ENCODE measurements at regions of chr3 and their contacts with region 1.

Region 1: DNA sequence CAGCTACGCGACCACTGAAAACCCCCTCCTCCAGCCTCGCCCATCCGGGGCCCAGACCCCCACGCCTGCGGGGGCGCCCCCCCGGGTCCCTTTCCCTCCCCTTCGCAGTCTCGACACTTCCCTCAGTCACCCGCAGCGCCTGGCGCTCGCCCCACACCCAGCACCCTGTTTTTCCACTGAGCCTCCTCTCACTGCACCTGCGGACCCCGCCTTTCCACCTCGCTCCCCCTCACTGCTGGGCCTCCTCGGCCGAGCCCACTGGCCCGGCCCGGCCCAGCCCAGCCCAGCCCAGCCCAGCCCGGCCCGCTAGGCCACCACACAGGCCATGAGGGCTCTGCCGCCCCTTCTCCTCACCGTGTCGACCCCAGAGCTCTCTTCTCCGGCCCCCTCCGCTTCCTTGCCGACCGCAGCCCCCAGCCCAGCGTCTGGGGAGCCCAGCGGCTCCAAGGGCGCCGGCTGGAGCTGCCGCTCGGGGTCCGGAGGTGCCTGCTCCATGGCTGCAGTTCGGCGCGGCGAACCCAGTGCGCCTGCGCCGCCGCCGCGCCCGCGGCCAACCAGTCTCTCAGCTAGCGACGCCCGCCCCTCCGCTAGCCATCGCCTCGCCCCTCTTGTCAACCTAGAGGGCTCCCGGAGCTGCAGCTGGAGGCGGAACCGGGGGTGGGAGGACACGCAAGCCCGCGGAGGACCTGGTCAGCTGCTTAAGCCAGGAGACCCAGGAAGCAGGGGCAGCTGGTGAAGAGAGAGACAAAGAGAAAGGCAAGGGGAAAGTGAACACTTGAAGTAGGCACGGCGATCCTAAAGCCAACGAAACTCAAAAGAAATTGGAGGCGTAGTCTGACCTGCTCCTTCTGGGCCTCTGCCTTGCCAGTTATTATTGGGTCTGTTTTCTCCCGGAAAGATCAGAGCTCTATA is at the start of gene SNX4:
- DNase-seq: peak; percentile 82 to 97
- H3K4me3 ChIP-seq: peak within 1 kb of the TSS; percentile 87 to 96
- H3K27ac ChIP-seq: peak within 1 kb of the TSS; percentile 82 to 83
- H3K4me1 ChIP-seq: peaks cover 7 to 10% of the 10 kb centered on the region in 2 donors
- H3K27me3 ChIP-seq: no peaks in the 10 kb centered on the region
- CTCF ChIP-seq: peak in 1 of 3 experiments; percentile 1
- total RNA-seq, gene SNX4: 20.8 TPM

Region 2: GRCh38 chr3:125443923-125444322 is 76.0 kb before region 1 on chr3:
- intact Hi-C with region 1: loop called (anchors 1 kb)
- DNase-seq: no peak
- H3K4me3 ChIP-seq: no peak overlapping the region
- H3K27ac ChIP-seq: peak overlapping the region in 1 of 2 donors; percentile 19
- H3K4me1 ChIP-seq: no peaks in the 10 kb centered on the region
- H3K27me3 ChIP-seq: no peaks in the 10 kb centered on the region
- CTCF ChIP-seq: no peak

Region 3: GRCh38 chr3:125624341-125624740 is 104.4 kb after region 1 on chr3:
- intact Hi-C with region 1: no loop called
- DNase-seq: no peak
- H3K4me3 ChIP-seq: no peak overlapping the region
- H3K27ac ChIP-seq: no peak overlapping the region
- H3K4me1 ChIP-seq: no peaks in the 10 kb centered on the region
- H3K27me3 ChIP-seq: no peaks in the 10 kb centered on the region
- CTCF ChIP-seq: no peak